ENCODE measurements at regions of chr19 and their contacts with region 1.

Region 1: DNA sequence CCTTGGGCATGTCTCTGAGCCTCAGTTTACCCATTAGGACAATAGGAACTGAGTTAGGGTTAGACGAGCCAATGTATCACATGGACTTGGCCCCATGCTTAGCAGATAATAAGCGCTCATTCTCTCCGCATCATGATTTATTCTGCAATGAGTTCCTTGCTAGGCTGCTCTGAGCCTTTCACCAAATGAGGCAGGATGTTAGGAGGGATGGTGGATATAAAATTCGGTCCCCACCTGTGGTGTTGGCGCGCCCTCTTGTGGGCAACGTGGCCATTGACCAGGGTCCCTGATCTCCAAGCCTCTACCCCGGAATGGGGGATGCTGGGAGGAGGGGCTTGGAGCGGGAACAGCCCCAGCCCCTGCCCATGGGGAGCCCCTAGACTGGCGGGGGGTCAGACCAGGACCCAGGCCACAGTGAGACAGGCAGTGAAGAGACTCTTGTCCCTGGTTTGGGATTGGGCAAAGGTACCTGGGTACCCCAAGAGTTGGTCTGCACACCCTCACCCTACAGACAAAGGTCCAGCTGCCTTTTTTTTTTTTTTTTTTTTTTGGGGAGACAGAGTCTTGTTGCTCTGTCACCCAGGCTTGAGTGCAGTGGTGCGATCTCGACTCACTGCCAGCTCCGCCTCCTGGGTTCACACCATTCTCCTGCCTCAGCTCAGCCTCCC is 43.9 kb downstream of the CERS4 start:
- DNase-seq: peak; percentile 90
- ATAC-seq: peak; percentile 56

Region 2: GRCh38 chr19:7943444-7944176 is 309.4 kb before region 1 on chr19 and contains the start of gene TIMM44:
- intact Hi-C with region 1: loop called (anchors 1 kb)
- DNase-seq: peak; percentile 98
- ATAC-seq: peak; percentile 99
- total RNA-seq, gene TIMM44: 111 TPM

Region 3: GRCh38 chr19:7970716-7971448 is 282.2 kb before region 1 on chr19:
- intact Hi-C with region 1: loop called (anchors 5 kb)
- DNase-seq: no peak
- ATAC-seq: no peak

Region 4: GRCh38 chr19:8005534-8006256 is 247.4 kb before region 1 on chr19 and contains the start of gene ELAVL1:
- intact Hi-C with region 1: loop called (anchors 5 kb)
- DNase-seq: peak; percentile 94
- ATAC-seq: peak; percentile 94
- total RNA-seq, gene ELAVL1: 55.1 TPM

Region 5: DNA sequence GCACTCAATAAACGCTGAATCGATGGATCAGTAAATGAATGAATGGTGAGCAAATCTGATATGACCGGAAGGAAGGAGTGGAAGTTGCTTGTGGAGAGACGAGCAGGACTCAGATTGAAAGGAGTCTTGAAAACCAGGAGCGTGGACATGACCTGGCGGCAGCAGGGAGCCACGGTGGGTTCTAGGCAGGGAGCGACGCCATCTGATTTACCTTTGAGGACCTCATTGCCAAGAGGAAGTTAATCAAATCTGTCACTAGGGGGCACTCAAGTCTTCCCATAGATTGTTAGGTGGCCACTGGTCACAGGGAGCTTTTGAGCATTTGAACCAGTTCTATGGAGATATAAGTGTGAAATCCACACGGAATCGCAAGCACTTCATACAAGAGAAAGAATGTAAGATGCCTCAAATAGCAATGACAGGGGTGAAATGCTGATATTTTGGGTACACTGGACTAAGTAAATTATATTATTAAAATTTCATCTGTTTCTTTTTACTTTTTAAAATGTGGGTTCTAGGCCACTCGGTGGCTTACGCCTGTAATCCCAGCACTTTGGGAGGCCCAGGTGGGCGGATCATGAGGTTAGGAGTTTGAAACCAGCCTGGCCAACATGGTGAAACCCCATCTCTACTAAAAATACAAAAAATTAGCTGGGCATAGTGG is 94.5 kb before region 1 on chr19:
- intact Hi-C with region 1: loop called (anchors 1 kb)
- DNase-seq: no peak
- ATAC-seq: peak; percentile 56

Region 6: GRCh38 chr19:8194528-8195267 is 58.4 kb before region 1 on chr19:
- intact Hi-C with region 1: no loop called
- DNase-seq: no peak
- ATAC-seq: peak; percentile 47

Region 7: GRCh38 chr19:8208922-8209461 is 44.1 kb before region 1 on chr19 and contains the start of gene CERS4:
- intact Hi-C with region 1: loop called (anchors 2 kb)
- DNase-seq: peak; percentile 91
- ATAC-seq: peak; percentile 95
- total RNA-seq, gene CERS4: 21.4 TPM

Region 8: DNA sequence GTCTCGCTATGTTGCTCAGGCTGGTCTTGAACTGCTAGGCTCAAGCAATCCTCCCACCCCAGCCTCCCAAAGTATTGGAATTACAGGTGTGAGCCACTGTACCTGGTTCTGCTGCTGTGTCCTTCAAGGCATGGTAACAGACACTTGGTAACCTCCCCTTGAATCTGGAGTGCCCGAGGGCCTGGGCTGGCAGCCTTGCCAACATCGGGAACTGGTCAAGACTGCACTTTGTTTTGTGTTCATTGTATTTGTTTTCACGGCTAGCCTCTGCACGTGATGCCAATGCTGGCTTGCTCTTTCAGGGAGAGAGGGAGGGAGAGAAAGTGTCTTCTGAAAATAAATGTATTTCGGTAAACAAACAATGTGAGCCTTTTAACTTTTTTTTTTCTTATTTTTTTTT is 31.9 kb before region 1 on chr19:
- intact Hi-C with region 1: no loop called
- DNase-seq: no peak
- ATAC-seq: no peak

Region 9: GRCh38 chr19:8307965-8308866 is 55.2 kb after region 1 on chr19 and contains the start of gene CD320:
- intact Hi-C with region 1: no loop called
- DNase-seq: peak; percentile 96
- ATAC-seq: peak; percentile 97
- total RNA-seq, gene CD320: 32.9 TPM

Measured in Right ventricle myocardium inferior (tissue), 1 donor.